GM10248 (cell line): ENCODE measurements at regions of chr6 and their contacts with region 1.

Region 1: GRCh38 chr6:149082286-149082707 is 235.2 kb upstream of the TAB2 start:
- DNase-seq: peak; percentile 69
- CTCF ChIP-seq: peak; percentile 81

Region 2: GRCh38 chr6:148720406-148720805 is 361.9 kb before region 1 on chr6:
- CTCF ChIA-PET with region 1: no interaction called
- POLR2A ChIA-PET with region 1: no interaction called
- DNase-seq: no peak
- CTCF ChIP-seq: no peak

Region 3: DNA sequence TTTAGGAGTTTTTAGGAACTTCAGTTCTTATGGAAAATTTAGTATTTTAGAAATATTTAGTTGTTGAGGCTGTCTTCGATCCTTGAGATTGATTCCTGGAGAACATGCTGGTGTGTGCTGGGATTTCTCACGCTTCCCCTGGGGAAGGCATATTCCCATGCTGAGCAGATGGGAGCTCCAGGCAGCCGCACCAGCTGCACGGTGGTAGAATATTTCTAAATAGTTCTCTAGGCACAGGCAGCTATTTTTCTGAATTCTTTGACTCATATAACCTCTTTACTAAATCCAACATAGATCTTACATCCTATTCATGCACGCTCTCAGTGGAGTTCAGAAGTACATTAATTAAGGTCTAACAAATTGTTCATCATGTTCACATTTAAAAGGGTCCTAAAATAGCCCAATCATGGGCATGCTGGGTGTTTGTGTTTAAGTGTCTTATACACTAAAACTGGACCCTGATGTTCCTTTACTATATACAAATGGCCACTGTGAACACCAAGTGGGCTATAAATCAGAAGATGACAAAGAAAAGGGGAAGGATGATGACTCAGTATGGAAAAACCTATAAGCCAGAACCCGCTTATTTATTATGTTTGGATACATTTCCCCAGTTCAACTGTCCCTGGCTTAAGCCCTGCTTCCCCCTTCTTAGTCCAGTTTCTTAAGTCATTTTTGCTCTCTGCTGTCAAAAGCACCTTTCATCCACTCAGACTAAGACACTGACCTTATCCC is 197.0 kb before region 1 on chr6:
- CTCF ChIA-PET with region 1: no interaction called
- POLR2A ChIA-PET with region 1: no interaction called
- DNase-seq: no peak
- CTCF ChIP-seq: no peak

Region 4: GRCh38 chr6:149065658-149066556 is 16.4 kb before region 1 on chr6:
- CTCF ChIA-PET with region 1: interaction called, 41 read pairs
- POLR2A ChIA-PET with region 1: no interaction called
- DNase-seq: peak; percentile 78
- CTCF ChIP-seq: no peak

Region 5: DNA sequence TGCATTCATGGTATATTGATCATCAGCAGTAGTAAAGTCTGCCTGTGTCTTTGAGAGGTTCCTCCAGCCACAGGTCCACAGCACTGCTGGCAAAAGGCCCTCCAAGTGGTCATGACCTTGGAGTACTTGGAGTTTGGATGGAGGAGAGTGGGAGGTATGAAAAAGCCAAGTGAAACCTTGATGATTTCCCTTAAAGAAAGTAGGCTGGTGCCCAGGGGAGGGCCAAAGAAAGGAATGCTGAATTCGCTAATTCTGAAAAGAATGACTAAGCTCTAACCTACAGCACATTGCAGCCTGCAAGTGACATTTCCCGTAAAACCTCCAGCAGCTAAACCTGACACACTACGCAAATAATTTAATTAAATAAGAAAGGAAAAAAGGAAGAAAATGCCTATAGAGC is 11.9 kb after region 1 on chr6:
- CTCF ChIA-PET with region 1: interaction called, 32 read pairs
- POLR2A ChIA-PET with region 1: no interaction called
- DNase-seq: no peak
- CTCF ChIP-seq: no peak

Region 6: GRCh38 chr6:149182262-149182661 is 100.0 kb after region 1 on chr6:
- CTCF ChIA-PET with region 1: no interaction called
- POLR2A ChIA-PET with region 1: no interaction called
- DNase-seq: no peak
- CTCF ChIP-seq: no peak